Sciatic nerve (tissue), 2 donors: ENCODE measurements at regions of chr17 and their contacts with region 1.

Region 1: GRCh38 chr17:58082870-58083490 is at the start of gene DYNLL2:
- DNase-seq: peak; percentile 94
- ATAC-seq: peak; percentile 98
- total RNA-seq, gene DYNLL2: 28.3 TPM

Region 2: GRCh38 chr17:57772774-57773173 is 310.2 kb before region 1 on chr17:
- intact Hi-C with region 1: no loop called
- DNase-seq: no peak
- ATAC-seq: no peak

Region 3: DNA sequence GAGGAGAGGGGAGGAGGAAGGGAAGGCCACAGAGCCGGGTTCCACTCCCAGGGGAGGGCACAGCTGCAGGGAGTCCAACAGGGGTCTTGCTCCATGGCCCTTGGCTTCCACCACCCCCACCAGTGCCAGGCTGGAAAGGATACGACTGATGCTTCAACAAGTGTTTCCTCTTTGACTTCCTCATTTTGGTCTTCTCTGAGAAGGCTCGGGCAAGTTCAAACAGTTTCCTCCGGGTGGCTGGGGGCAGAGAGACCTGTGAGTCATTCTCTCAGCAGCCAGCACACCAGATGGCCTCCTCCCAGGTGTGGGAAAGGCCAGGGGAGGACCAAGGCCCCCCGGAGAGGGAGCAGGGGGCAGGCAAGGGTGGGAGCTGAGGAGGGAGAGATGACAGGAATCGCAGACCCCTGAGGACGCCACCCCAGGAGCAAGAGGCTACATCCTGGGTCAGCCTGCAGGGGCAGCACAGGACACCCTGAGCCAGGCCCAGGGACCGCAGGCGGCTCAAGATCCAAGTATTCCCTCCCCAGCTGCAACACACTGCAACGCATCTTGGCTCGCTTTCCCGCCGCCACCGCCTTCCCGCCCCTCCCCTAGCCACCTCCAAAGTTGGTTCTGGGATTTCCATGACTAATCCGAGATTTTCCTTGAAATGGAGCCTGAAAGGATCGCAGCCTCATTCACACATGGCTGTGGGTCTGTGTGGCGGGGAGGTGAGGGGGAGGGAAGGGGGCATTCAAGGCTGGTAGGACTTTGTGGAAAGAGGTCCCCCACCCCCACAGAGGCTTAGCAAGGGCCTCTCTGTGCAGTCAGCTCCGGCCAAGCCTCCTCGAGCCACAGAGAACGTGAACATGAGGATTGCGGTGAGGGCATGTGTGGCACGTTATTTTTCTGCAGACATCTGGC is 214.7 kb before region 1 on chr17:
- intact Hi-C with region 1: loop called (anchors 10 kb)
- DNase-seq: peak; percentile 85
- ATAC-seq: peak; percentile 90

Region 4: GRCh38 chr17:58028578-58028977 is 54.4 kb before region 1 on chr17:
- intact Hi-C with region 1: loop called (anchors 10 kb)
- DNase-seq: no peak
- ATAC-seq: no peak

Region 5: DNA sequence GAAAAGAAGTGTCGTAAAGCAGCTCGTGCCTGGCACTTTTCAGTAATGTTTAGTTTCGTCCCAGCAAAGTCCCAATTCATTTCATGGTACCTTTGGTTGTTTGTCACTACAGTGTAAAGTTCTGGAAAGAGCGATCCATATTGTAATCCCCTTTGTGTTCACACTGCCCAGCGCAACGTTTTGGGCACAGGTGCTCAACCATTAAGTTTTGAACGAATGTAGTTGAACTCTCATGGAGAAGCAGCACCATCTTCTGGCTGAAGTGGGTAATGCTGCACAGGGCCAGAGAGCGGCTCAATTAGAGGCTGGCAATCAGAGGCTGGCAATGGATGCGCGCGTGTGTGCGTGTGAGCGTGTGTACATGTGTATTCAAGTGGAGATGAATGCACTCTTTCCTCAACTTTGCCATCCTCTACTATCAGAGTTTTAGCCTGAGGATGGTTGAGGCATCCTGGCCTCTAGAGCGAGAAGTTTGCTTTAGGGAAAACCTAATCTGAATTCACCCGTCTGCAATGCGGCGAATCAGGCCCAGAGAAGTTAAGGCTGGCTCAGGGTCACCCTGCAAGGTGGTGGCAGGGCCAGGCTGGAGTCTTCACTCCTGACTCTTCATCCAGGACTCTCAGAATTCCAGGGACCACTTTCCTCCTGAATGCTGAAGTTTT is 30.1 kb after region 1 on chr17:
- intact Hi-C with region 1: no loop called
- DNase-seq: peak; percentile 89
- ATAC-seq: peak; percentile 81

Region 6: GRCh38 chr17:59607817-59608403 is 1524.9 kb after region 1 on chr17:
- intact Hi-C with region 1: no loop called
- DNase-seq: no peak
- ATAC-seq: no peak